Panc1 (cell line): ENCODE measurements at regions of chr20 and their contacts with region 1.

Region 1: GRCh38 chr20:45300961-45301360 is 5.7 kb upstream of the RBPJL start:
- DNase-seq: no peak
- ATAC-seq: peak; percentile 85
- H3K4me3 ChIP-seq: no peak overlapping the region
- H3K27ac ChIP-seq: no peak overlapping the region
- H3K4me1 ChIP-seq: no peaks in the 10 kb centered on the region
- H3K27me3 ChIP-seq: no peaks in the 10 kb centered on the region
- CTCF ChIP-seq: peak; percentile 57

Region 2: DNA sequence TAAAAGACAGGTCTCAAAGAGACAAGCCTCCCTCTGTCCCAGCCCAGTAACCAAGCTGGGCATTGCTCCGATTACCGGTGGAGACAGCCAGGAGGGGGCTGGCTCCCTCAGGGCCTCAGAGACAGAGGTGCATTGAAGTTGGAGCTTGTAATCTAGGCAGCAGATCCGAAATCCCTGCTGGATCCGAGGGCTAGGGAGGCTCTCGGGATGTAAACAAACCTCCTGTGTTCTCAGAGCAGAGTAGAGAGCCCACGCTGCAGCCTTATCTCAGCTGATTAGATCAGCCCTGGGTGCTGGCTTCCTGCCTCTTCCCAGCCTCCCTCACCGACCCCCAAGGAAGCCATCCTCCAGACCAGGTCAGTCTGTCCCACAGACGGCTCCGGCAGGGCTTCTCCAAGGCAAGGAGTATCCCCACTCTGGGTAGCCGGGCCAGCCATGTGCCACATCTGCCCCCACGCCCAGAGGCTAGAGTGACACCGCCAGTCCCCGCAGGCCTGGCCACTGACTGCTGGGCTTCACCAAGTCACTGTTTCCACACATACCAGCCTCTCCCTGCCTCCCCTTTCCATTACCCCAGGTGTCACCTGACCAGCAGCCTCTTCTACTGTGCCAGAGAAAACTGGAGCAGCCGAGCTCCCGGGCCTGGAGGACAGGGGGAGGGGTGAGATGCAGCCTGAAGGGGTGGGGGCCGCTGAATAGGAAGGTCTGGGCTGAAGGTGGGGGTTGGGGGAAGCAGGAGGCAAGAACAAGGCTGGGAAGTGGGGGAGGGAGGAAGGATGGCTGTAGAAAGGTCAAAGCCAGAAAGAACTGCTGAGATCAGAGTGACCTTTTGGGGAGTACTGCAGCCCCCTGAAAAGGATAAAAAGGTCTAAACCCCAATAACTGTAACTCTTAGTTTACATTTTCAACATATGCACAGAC is 41.2 kb after region 1 on chr20:
- CTCF ChIA-PET with region 1: interaction called, 16 read pairs
- POLR2A ChIA-PET with region 1: no interaction called
- in situ Hi-C with region 1: no loop called
- intact Hi-C with region 1: no loop called
- DNase-seq: no peak
- ATAC-seq: peak; percentile 47
- H3K4me3 ChIP-seq: peak overlapping the region; percentile 18 to 94
- H3K27ac ChIP-seq: peak overlapping the region; percentile 83
- H3K4me1 ChIP-seq: peaks cover 97% of the 10 kb centered on the region
- H3K27me3 ChIP-seq: no peaks in the 10 kb centered on the region
- CTCF ChIP-seq: no peak